ENCODE measurements at regions of chr10 and their contacts with region 1.

Region 1: DNA sequence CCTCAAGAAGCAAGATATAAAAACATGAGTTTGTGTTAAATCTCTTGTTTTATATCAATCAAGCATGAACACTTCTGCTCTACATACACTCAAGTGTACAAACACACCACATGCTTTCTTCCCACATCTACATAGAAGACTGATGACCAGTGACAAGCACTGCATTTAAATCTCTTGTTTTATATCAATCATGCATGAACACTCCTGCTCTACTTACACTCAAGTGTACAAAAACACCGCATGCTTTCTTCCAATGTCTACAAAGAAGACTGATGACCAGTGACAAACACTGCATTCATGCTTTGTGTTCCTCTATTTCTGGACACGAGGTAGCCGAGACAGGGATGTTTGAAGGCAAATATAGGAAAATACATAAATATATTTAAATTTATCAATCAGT is 642.0 kb upstream of the PFKP start:
- DNase-seq: no peak

Region 2: DNA sequence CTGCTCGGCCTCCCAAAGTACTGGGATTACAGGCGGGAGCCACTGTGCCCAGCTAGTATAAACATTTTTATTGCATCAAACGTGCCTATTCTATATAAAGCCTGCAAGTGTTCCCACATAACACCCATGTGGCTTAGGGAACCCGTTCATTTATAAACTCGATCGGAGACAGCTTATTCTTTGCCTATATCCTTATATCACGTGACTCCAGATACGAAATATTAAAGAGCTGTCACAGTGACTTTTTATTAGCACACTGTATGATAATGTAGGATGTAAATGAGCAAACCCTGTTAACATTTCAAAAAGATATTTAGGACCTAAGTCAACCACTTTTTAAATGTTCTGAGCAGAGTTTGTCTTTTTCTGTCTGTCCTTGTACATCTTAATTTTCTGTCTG is 45.1 kb before region 1 on chr10:
- intact Hi-C with region 1: no loop called
- DNase-seq: no peak

Region 3: DNA sequence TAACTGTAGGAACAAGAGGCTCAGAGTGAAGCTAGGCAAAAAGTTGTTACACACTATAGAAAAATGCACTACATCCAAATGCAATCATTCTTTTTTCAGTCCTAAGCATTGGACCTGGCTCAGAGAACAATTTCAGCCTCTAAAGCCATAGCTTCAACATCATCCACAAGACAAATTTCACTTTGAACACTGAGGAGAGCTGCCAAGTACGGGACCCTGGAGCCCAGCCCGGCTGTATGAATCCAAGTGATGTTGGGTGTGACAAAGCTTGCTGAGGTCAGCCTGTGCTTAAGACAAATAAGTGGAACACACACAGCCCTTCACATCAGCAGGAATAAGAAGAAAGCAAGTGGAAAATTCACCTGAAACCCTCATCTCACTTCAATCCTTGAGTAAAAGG is 408.9 kb after region 1 on chr10:
- intact Hi-C with region 1: loop called in 1 of 2 experiments (anchors 5 kb)
- DNase-seq: no peak